Motor neuron (in vitro differentiated cells): ENCODE measurements at regions of chr6 and their contacts with region 1.

Region 1: GRCh38 chr6:145028144-145028818 is 707.0 kb downstream of the EPM2A start:
- ATAC-seq: peak in 3 of 8 experiments; percentile 67 to 85 (median 82)
- H3K4me3 ChIP-seq: no peak overlapping the region
- H3K27ac ChIP-seq: no peak overlapping the region
- H3K4me1 ChIP-seq: no peaks in the 10 kb centered on the region

Region 2: DNA sequence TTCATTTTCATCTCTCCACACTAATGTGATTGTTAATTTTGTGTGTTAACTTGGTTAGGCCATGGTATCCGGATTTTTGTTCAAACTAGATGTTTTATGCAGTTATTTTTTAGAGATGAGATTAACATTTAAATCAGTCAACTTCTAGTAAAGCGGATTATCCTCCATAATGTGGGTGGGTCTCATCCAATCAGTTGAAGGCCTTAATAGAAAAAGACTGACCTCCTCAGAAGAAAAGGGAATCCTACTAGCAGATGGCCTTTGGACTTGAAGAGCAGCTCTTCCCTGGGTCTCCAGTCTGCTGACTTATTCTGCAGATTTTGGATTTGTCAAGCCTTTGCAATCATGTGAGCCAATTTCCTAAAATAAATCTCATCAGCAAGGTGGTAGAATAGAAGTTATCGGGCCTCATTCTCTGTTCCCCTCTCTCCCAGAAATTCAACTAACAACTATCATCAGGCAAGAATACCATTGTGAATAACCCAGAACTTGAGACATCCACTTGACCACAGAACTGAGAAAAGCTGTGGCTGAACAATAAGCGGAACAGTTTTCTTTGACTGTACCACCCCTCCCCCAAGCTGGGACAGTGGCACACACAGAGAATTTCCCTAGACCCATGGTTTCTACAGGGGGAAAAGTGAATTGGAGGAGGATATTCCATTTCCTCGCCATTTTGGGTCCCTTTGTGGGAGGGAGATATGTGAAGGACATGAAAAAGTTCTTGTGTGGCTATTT is 420.1 kb before region 1 on chr6:
- in situ Hi-C with region 1: no loop called
- ATAC-seq: no peak
- H3K4me3 ChIP-seq: no peak overlapping the region
- H3K27ac ChIP-seq: no peak overlapping the region
- H3K4me1 ChIP-seq: peaks cover 3 to 9% of the 10 kb centered on the region in 2 donors

Region 3: GRCh38 chr6:145147981-145148783 is 119.9 kb after region 1 on chr6:
- in situ Hi-C with region 1: loop called in 1 of 9 experiments (anchors 25 kb)
- ATAC-seq: peak; percentile 52 to 92 (median 68)
- H3K4me3 ChIP-seq: no peak overlapping the region
- H3K27ac ChIP-seq: no peak overlapping the region
- H3K4me1 ChIP-seq: peaks cover 29 to 51% of the 10 kb centered on the region in 2 donors

Region 4: GRCh38 chr6:145214570-145214969 is 186.3 kb after region 1 on chr6:
- in situ Hi-C with region 1: loop called in 1 of 9 experiments (anchors 25 kb)
- ATAC-seq: no peak
- H3K4me3 ChIP-seq: no peak overlapping the region
- H3K27ac ChIP-seq: no peak overlapping the region
- H3K4me1 ChIP-seq: peaks cover 0 to 6% of the 10 kb centered on the region in 2 donors